Posterior vena cava (tissue), 2 donors: ENCODE measurements at regions of chr17 and their contacts with region 1.

Region 1: GRCh38 chr17:45218895-45219661 is 2.6 kb upstream of the FMNL1 start:
- DNase-seq: peak; percentile 95

Region 2: GRCh38 chr17:45277216-45277849 is 58.3 kb after region 1 on chr17:
- intact Hi-C with region 1: loop called in 1 of 2 experiments (anchors 5 kb)
- DNase-seq: peak; percentile 98